GM10248 (cell line): ENCODE measurements at regions of chr2 and their contacts with region 1.

Region 1: GRCh38 chr2:99337113-99338028 is at the start of gene EIF5B:
- DNase-seq: peak; percentile 93
- CTCF ChIP-seq: peak; percentile 90

Region 2: DNA sequence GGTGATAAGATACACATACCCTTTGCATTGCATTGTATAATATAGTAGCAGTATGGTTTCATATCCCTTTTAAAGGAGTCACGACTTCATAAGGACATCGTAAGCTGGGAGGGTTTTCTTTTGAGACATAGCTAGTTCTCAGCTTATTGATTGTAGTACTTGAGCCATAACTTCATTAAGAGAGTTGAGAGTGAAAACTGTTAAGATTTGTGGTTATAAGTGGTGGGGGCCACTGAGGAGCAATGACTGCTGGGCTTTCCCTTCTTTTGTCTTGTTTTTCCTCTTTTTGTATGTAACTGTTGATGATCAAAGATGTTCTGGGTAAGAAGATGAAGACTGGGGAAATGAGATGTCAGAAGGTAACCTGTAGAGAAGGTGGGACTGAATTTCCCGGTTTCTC is 10.8 kb after region 1 on chr2:
- CTCF ChIA-PET with region 1: interaction called, 32 read pairs
- POLR2A ChIA-PET with region 1: no interaction called
- DNase-seq: peak; percentile 19
- CTCF ChIP-seq: no peak

Region 3: DNA sequence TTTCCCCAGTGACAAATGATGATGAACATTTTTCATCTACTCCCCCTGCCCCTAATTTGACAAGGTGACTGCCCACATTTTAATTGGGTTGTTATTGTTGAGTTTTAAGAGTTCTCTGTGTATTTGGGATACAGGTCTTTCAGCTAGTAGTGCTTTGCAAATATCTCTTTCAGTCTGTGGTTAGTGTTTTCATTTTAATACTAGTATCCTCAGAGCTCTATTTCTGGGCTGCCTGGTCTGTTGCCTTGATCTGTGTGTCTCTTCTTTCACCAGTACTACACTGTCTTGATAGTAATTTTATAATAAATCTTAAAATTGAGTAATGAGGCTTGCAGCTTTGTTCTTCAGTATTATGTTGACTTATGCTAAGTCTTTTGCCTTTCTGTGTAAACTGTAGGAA is 19.5 kb after region 1 on chr2:
- CTCF ChIA-PET with region 1: interaction called, 18 read pairs
- POLR2A ChIA-PET with region 1: no interaction called
- DNase-seq: no peak
- CTCF ChIP-seq: no peak

Region 4: GRCh38 chr2:99524056-99524455 is 186.7 kb after region 1 on chr2:
- CTCF ChIA-PET with region 1: no interaction called
- POLR2A ChIA-PET with region 1: no interaction called
- DNase-seq: no peak
- CTCF ChIP-seq: no peak

Region 5: GRCh38 chr2:99670768-99671734 is 333.7 kb after region 1 on chr2:
- CTCF ChIA-PET with region 1: no interaction called
- POLR2A ChIA-PET with region 1: no interaction called
- DNase-seq: no peak
- CTCF ChIP-seq: no peak